MCF 10A (cell line): ENCODE measurements at regions of chr4 and their contacts with region 1.

Region 1: GRCh38 chr4:15066140-15066539 is 63.9 kb downstream of the CPEB2 start:
- DNase-seq: no peak
- H3K4me3 Mint-ChIP-seq: no peak overlapping the region
- H3K27ac Mint-ChIP-seq: no peak overlapping the region
- H3K4me1 Mint-ChIP-seq: no peaks in the 10 kb centered on the region
- H3K27me3 Mint-ChIP-seq: no peaks in the 10 kb centered on the region
- CTCF ChIP-seq: no peak

Region 2: GRCh38 chr4:15100994-15101695 is 35.0 kb after region 1 on chr4:
- CTCF ChIA-PET with region 1: no interaction called
- POLR2A ChIA-PET with region 1: interaction called, 4 read pairs
- intact Hi-C with region 1: loop called (anchors 1 kb)
- DNase-seq: no peak
- H3K4me3 Mint-ChIP-seq: no peak overlapping the region
- H3K27ac Mint-ChIP-seq: no peak overlapping the region
- H3K4me1 Mint-ChIP-seq: peaks cover 6% of the 10 kb centered on the region
- H3K27me3 Mint-ChIP-seq: no peaks in the 10 kb centered on the region
- CTCF ChIP-seq: no peak

Region 3: GRCh38 chr4:15318621-15319348 is 252.6 kb after region 1 on chr4:
- CTCF ChIA-PET with region 1: no interaction called
- POLR2A ChIA-PET with region 1: no interaction called
- intact Hi-C with region 1: no loop called
- DNase-seq: no peak
- H3K4me3 Mint-ChIP-seq: no peak overlapping the region
- H3K27ac Mint-ChIP-seq: no peak overlapping the region
- H3K4me1 Mint-ChIP-seq: no peaks in the 10 kb centered on the region
- H3K27me3 Mint-ChIP-seq: no peaks in the 10 kb centered on the region
- CTCF ChIP-seq: no peak

Region 4: DNA sequence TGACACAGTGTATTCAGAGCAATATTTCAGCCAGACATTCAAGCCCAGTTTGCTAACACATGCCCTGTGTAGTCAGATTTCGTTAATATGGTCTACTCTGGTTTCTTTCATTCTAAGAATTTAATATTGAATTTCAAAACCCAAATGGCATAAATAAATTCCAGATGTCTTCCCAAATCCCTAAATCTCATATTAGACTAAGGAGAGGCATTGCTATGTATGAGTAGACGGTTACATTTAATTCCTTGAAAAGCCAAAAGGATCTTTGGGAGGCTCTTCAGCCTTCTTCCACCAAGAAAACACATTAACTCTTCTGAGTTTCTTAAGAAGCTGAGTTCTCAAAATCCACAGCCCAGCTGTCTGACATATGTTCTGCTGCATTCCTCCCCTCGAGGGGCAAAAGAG is 295.4 kb after region 1 on chr4:
- CTCF ChIA-PET with region 1: no interaction called
- POLR2A ChIA-PET with region 1: no interaction called
- intact Hi-C with region 1: no loop called
- DNase-seq: no peak
- H3K4me3 Mint-ChIP-seq: no peak overlapping the region
- H3K27ac Mint-ChIP-seq: no peak overlapping the region
- H3K4me1 Mint-ChIP-seq: no peaks in the 10 kb centered on the region
- H3K27me3 Mint-ChIP-seq: no peaks in the 10 kb centered on the region
- CTCF ChIP-seq: no peak

Region 5: GRCh38 chr4:15655229-15656037 is 589.3 kb after region 1 on chr4 and contains the start of gene FBXL5:
- CTCF ChIA-PET with region 1: no interaction called
- POLR2A ChIA-PET with region 1: no interaction called
- intact Hi-C with region 1: no loop called
- DNase-seq: peak; percentile 85
- H3K4me3 Mint-ChIP-seq: peak within 1 kb of the TSS; percentile 97
- H3K27ac Mint-ChIP-seq: peak within 1 kb of the TSS; percentile 96
- H3K4me1 Mint-ChIP-seq: peaks cover 22% of the 10 kb centered on the region
- H3K27me3 Mint-ChIP-seq: no peaks in the 10 kb centered on the region
- CTCF ChIP-seq: no peak
- total RNA-seq, gene FBXL5: 68.0 and 96.8 TPM in 2 replicates